Naive thymus-derived CD4-positive, alpha-beta T cell (primary cell): ENCODE measurements at regions of chr2 and their contacts with region 1.

Region 1: GRCh38 chr2:38981003-38981669 is 91.5 kb downstream of the ARHGEF33 start:
- DNase-seq: no peak
- ATAC-seq: no peak
- H3K4me3 ChIP-seq: no peak overlapping the region
- H3K4me3 Mint-ChIP-seq: no peak overlapping the region
- H3K27ac ChIP-seq: no peak overlapping the region
- H3K27ac Mint-ChIP-seq: no peak overlapping the region
- H3K4me1 ChIP-seq: no peaks in the 10 kb centered on the region
- H3K4me1 Mint-ChIP-seq: peaks cover 0 to 11% (median 0%) of the 10 kb centered on the region in 7 donors
- H3K27me3 ChIP-seq: no peaks in the 10 kb centered on the region
- H3K27me3 Mint-ChIP-seq: no peaks in the 10 kb centered on the region

Region 2: GRCh38 chr2:37720533-37721200 is 1260.5 kb before region 1 on chr2:
- CTCF ChIA-PET with region 1: no interaction called
- POLR2A ChIA-PET with region 1: no interaction called
- intact Hi-C with region 1: no loop called
- DNase-seq: no peak
- ATAC-seq: no peak
- H3K4me3 ChIP-seq: no peak overlapping the region
- H3K4me3 Mint-ChIP-seq: no peak overlapping the region
- H3K27ac ChIP-seq: no peak overlapping the region
- H3K27ac Mint-ChIP-seq: no peak overlapping the region
- H3K4me1 ChIP-seq: no peaks in the 10 kb centered on the region
- H3K4me1 Mint-ChIP-seq: peaks cover 0 to 5% (median 0%) of the 10 kb centered on the region in 7 donors
- H3K27me3 ChIP-seq: no peaks in the 10 kb centered on the region
- H3K27me3 Mint-ChIP-seq: peaks cover 0 to 16% (median 0%) of the 10 kb centered on the region in 5 donors

Region 3: GRCh38 chr2:39017334-39017733 is 36.2 kb after region 1 on chr2:
- CTCF ChIA-PET with region 1: no interaction called
- POLR2A ChIA-PET with region 1: no interaction called
- intact Hi-C with region 1: loop called in 1 of 2 experiments (anchors 5 kb)
- DNase-seq: no peak
- ATAC-seq: no peak
- H3K4me3 ChIP-seq: no peak overlapping the region
- H3K4me3 Mint-ChIP-seq: no peak overlapping the region
- H3K27ac ChIP-seq: no peak overlapping the region
- H3K27ac Mint-ChIP-seq: no peak overlapping the region
- H3K4me1 ChIP-seq: no peaks in the 10 kb centered on the region
- H3K4me1 Mint-ChIP-seq: peaks cover 0 to 17% (median 0%) of the 10 kb centered on the region in 7 donors
- H3K27me3 ChIP-seq: no peaks in the 10 kb centered on the region
- H3K27me3 Mint-ChIP-seq: no peaks in the 10 kb centered on the region